ENCODE measurements at regions of chr3 and their contacts with region 1.

Region 1: DNA sequence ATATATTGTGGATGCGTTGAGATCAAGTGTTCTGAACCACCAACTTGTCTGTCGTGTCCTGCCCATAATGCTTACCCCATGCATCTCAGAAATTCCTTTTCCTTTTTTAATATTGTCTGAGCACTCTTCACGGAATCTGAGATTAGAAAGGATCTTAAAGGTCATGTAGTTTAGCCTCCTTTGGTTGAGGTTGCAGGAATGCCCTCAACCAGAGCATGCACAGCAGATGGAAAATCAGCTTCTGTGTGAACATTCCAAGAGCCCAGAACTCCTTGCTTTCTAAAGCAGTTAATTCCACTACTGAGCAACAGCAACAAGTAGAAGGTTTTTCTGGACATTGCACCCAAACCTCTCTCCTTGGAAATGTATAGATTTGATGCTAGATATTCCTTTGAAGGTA is 153.7 kb downstream of the TPRG1 start:
- DNase-seq: no peak
- ATAC-seq: no peak; the same call in 1 of the 2 replicates
- H3K4me3 ChIP-seq: no peak overlapping the region
- H3K27ac ChIP-seq: peak overlapping the region; percentile 36
- H3K4me1 ChIP-seq: peaks cover 19% of the 10 kb centered on the region
- H3K27me3 ChIP-seq: no peaks in the 10 kb centered on the region
- CTCF ChIP-seq: no peak

Region 2: DNA sequence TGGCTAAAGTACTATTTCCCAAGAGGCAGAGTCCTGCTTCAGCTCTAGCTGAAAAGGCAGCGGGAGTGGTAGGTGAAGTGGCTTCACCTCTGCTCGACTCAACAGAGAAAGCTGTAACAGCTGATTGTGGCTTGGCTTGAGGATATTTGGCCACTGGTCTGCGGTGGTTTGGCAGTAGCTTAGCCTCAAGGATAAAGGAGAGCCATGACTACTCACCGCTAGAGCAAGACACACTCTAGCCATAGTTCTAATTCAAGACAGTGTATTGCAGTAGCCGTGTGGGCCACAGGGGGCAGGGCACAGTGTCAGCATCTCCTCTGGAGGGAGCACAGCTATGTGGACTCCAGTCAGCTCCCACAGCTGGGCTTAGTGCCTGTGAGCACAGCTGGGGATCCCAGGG is 130.1 kb before region 1 on chr3:
- CTCF ChIA-PET with region 1: no interaction called
- POLR2A ChIA-PET with region 1: no interaction called
- in situ Hi-C with region 1: no loop called
- intact Hi-C with region 1: no loop called
- DNase-seq: no peak
- ATAC-seq: no peak
- H3K4me3 ChIP-seq: no peak overlapping the region
- H3K27ac ChIP-seq: no peak overlapping the region
- H3K4me1 ChIP-seq: no peaks in the 10 kb centered on the region
- H3K27me3 ChIP-seq: 0 out of 2 replicates have a peak, but pooled peaks cover 4% of the 10 kb centered on the region
- CTCF ChIP-seq: no peak; the same call in 1 of the 2 replicates

Region 3: DNA sequence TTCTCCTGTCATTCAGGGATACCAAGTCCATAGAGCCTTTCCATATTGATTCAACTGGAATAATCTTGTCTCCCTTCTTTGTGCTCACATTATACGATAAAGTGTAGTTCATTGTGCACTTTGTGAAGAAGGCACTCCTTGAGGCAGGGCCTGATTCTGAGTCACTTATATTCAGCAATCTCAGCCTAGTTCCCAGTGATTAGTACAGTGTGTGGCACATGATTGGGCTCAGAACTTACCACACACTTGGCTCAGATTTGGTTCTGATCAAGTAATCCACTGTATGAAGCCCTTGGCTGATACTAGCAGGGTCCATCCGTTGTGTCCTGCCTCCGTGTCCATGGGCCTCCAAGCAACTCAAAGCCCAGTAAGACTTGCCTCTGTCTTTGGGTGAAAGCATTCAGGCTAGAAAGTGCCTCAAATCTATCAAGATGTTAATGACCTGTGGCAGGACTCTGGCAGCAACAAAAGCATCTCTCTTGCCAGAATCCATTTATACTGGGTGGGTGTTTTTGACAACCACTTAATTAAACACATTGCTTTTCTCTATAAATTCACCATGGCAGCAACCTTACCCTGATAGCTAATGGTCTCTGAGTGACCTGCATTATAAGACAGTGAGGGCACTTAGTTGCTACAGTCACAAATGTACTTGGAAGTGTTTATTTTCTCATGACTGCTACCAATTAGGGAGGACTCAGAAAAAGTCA is 102.4 kb before region 1 on chr3:
- CTCF ChIA-PET with region 1: no interaction called
- POLR2A ChIA-PET with region 1: no interaction called
- in situ Hi-C with region 1: no loop called
- intact Hi-C with region 1: no loop called
- DNase-seq: no peak
- ATAC-seq: no peak
- H3K4me3 ChIP-seq: no peak overlapping the region
- H3K27ac ChIP-seq: no peak overlapping the region
- H3K4me1 ChIP-seq: no peaks in the 10 kb centered on the region
- H3K27me3 ChIP-seq: no peaks in the 10 kb centered on the region
- CTCF ChIP-seq: no peak

Region 4: GRCh38 chr3:189292667-189293478 is 32.6 kb before region 1 on chr3:
- CTCF ChIA-PET with region 1: no interaction called
- POLR2A ChIA-PET with region 1: interaction called, 13 read pairs
- in situ Hi-C with region 1: no loop called
- intact Hi-C with region 1: no loop called
- DNase-seq: no peak
- ATAC-seq: no peak
- H3K4me3 ChIP-seq: no peak overlapping the region
- H3K27ac ChIP-seq: no peak overlapping the region
- H3K4me1 ChIP-seq: no peaks in the 10 kb centered on the region
- H3K27me3 ChIP-seq: no peaks in the 10 kb centered on the region
- CTCF ChIP-seq: no peak

Region 5: GRCh38 chr3:189477614-189478013 is 152.2 kb after region 1 on chr3:
- CTCF ChIA-PET with region 1: no interaction called
- POLR2A ChIA-PET with region 1: no interaction called
- in situ Hi-C with region 1: no loop called
- intact Hi-C with region 1: no loop called
- DNase-seq: no peak
- ATAC-seq: no peak
- H3K4me3 ChIP-seq: no peak overlapping the region
- H3K27ac ChIP-seq: no peak overlapping the region
- H3K4me1 ChIP-seq: no peaks in the 10 kb centered on the region
- H3K27me3 ChIP-seq: no peaks in the 10 kb centered on the region
- CTCF ChIP-seq: no peak

Region 6: DNA sequence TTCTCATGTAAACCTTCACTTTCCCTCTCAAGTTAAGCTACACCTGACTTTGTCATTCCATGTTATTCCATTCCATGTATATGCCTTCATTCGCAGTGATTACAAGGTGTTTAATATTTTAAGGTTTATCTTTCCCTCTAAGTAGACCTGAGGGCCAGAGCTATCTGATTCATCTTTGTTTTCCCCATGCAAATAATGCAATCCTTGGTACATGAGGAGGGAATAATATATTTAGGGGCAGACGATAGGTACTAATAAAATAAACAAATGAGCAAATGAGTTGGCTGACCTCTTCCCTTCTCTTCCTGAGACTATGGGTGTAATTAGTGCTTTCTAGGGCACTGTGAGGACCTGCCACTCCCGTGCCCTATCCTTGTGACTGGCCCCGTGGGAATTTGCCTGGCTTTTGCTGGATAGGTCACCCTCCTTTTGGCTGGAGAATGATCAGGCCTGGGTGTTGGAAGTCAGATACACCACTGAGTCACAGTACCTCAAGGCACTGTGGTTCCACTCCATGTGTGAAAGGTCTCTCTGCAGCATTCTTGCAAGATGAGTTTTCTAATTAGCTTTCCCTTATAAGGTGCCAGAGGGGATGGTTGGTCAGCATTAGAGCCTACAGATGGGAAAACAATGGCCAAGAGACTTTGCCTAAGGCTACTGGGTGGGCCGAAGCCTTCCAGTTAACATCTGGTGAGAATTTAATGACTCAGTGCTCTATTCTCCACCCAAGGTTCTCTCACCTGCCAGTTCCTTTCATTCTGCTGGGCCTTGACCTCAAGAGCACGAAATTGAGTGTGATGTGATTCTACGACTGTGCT is 612.1 kb after region 1 on chr3:
- CTCF ChIA-PET with region 1: no interaction called
- POLR2A ChIA-PET with region 1: no interaction called
- in situ Hi-C with region 1: no loop called
- intact Hi-C with region 1: no loop called
- DNase-seq: peak; percentile 100
- ATAC-seq: peak; percentile 93
- H3K4me3 ChIP-seq: no peak overlapping the region
- H3K27ac ChIP-seq: peak overlapping the region; percentile 24; the same call in 1 of the 2 replicates
- H3K4me1 ChIP-seq: peaks cover 5% of the 10 kb centered on the region
- H3K27me3 ChIP-seq: no peaks in the 10 kb centered on the region
- CTCF ChIP-seq: no peak